ENCODE measurements at regions of chr10 and their contacts with region 1.

Region 1: GRCh38 chr10:124677749-124678556 is 66.2 kb downstream of the FAM53B start:
- DNase-seq: no peak
- ATAC-seq: no peak
- H3K4me3 Mint-ChIP-seq: peak overlapping the region; percentile 65
- H3K27ac Mint-ChIP-seq: peak overlapping the region; percentile 73
- H3K4me1 Mint-ChIP-seq: peaks cover 33% of the 10 kb centered on the region
- H3K27me3 Mint-ChIP-seq: no peaks in the 10 kb centered on the region

Region 2: GRCh38 chr10:124604214-124605000 is 73.5 kb before region 1 on chr10:
- POLR2A ChIA-PET with region 1: no interaction called
- DNase-seq: no peak
- ATAC-seq: no peak
- H3K4me3 Mint-ChIP-seq: no peak overlapping the region
- H3K27ac Mint-ChIP-seq: no peak overlapping the region
- H3K4me1 Mint-ChIP-seq: no peaks in the 10 kb centered on the region
- H3K27me3 Mint-ChIP-seq: no peaks in the 10 kb centered on the region

Region 3: GRCh38 chr10:124688889-124689670 is 11.1 kb after region 1 on chr10:
- POLR2A ChIA-PET with region 1: interaction called, 14 read pairs
- DNase-seq: no peak
- ATAC-seq: peak; percentile 93
- H3K4me3 Mint-ChIP-seq: peak overlapping the region; percentile 15
- H3K27ac Mint-ChIP-seq: peak overlapping the region; percentile 44
- H3K4me1 Mint-ChIP-seq: peaks cover 39% of the 10 kb centered on the region
- H3K27me3 Mint-ChIP-seq: no peaks in the 10 kb centered on the region

Measured in activated naive CD8-positive, alpha-beta T cell treated with anti-CD3 and anti-CD28 coated beads, Interleukin-2, amount 10 ng/mL, durations not matched to agents 7 days and 5 days (primary cell).